K562 (cell line): ENCODE measurements at regions of chr7 and their contacts with region 1.

Region 1: GRCh38 chr7:129825496-129826267 is 127.1 kb downstream of the UBE2H start:
- DNase-seq: peak; percentile 92 to 98 (median 94)
- ATAC-seq: peak; percentile 84
- H3K4me3 ChIP-seq: peak overlapping the region; percentile 47
- H3K27ac ChIP-seq: no peak overlapping the region; the same call in 2 of the 3 replicates
- H3K4me1 ChIP-seq: peaks cover 21 to 28% of the 10 kb centered on the region in 2 experiments; a peak in 4 of 5 replicates
- H3K27me3 ChIP-seq: 0 out of 5 replicates have a peak, but pooled peaks cover 0 to 5% of the 10 kb centered on the region in 2 experiments
- CTCF ChIP-seq: peak in 2 of 3 experiments; percentile 82 to 90; a peak in 5 of 6 replicates
- EP300 ChIP-seq: no peak
- POLR2A ChIP-seq: no peak
- RAD21 ChIP-seq: peak; percentile 75 to 80

Region 2: GRCh38 chr7:129224251-129225205 is 601.2 kb before region 1 on chr7 and contains the start of gene AHCYL2:
- CTCF ChIA-PET with region 1: no interaction called
- POLR2A ChIA-PET with region 1: no interaction called
- in situ Hi-C with region 1: no loop called
- intact Hi-C with region 1: loop called (anchors 10 kb)
- DNase-seq: peak; percentile 98 to 100 (median 98)
- ATAC-seq: peak; percentile 97
- H3K4me3 ChIP-seq: peak within 1 kb of the TSS; percentile 73
- H3K27ac ChIP-seq: peak within 1 kb of the TSS; percentile 90
- H3K4me1 ChIP-seq: peaks cover 5 to 11% of the 10 kb centered on the region in 2 experiments; a peak in 4 of 5 replicates
- H3K27me3 ChIP-seq: peaks cover 0 to 5% of the 10 kb centered on the region in 2 experiments; a peak in 1 of 5 replicates
- CTCF ChIP-seq: peak in 1 of 3 experiments; percentile 21; a peak in 1 of 6 replicates
- EP300 ChIP-seq: no peak; the same call in 1 of the 2 replicates
- POLR2A ChIP-seq: peak; percentile 78
- RAD21 ChIP-seq: no peak
- polyA plus RNA-seq, gene AHCYL2: 0.93 to 2.0 TPM

Region 3: DNA sequence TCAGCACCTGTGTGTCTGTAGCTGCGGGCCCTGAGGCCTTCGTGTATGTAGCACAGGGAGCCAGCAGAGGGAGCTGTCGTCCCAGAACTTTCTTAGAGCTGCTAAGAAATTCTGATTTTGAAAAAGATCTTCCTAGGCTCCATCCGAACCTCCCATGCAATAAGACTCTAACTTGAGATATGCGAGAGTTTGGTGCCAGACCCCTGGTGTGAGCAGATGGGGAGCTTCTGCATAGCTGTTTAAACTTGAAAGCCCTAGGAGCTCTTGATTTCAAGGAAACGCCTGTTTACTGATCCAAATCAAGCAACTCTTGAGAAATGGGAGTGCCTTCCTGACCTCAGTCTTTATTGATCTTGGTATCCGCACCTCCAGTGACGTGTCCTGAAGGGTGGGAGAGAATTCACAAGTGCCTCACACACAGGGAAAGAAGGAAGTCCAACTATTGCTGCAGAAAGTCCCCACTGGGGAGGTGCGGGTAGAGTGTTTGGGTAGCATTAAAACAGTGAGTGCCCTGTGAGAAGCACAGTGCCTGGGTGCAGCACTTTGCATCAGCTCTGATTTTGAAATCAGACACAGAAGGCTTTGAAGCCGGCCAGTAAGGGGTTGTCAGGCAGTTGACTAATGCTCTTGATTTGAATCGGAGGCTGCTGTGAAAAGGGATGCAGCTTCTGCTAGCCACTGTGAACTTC is 457.8 kb before region 1 on chr7:
- CTCF ChIA-PET with region 1: no interaction called
- POLR2A ChIA-PET with region 1: no interaction called
- in situ Hi-C with region 1: no loop called
- intact Hi-C with region 1: loop called (anchors 5 kb)
- DNase-seq: peak; percentile 79 to 91 (median 83)
- ATAC-seq: peak; percentile 96
- H3K4me3 ChIP-seq: 0 out of 2 replicates have a peak overlapping the region, but pooled peaks have one; percentile 0
- H3K27ac ChIP-seq: no peak overlapping the region
- H3K4me1 ChIP-seq: peaks cover 6 to 15% of the 10 kb centered on the region in 2 experiments; a peak in 4 of 5 replicates
- H3K27me3 ChIP-seq: no peaks in the 10 kb centered on the region
- CTCF ChIP-seq: peak; percentile 91 to 99 (median 98)
- EP300 ChIP-seq: no peak
- POLR2A ChIP-seq: no peak
- RAD21 ChIP-seq: peak; percentile 90 to 94

Region 4: DNA sequence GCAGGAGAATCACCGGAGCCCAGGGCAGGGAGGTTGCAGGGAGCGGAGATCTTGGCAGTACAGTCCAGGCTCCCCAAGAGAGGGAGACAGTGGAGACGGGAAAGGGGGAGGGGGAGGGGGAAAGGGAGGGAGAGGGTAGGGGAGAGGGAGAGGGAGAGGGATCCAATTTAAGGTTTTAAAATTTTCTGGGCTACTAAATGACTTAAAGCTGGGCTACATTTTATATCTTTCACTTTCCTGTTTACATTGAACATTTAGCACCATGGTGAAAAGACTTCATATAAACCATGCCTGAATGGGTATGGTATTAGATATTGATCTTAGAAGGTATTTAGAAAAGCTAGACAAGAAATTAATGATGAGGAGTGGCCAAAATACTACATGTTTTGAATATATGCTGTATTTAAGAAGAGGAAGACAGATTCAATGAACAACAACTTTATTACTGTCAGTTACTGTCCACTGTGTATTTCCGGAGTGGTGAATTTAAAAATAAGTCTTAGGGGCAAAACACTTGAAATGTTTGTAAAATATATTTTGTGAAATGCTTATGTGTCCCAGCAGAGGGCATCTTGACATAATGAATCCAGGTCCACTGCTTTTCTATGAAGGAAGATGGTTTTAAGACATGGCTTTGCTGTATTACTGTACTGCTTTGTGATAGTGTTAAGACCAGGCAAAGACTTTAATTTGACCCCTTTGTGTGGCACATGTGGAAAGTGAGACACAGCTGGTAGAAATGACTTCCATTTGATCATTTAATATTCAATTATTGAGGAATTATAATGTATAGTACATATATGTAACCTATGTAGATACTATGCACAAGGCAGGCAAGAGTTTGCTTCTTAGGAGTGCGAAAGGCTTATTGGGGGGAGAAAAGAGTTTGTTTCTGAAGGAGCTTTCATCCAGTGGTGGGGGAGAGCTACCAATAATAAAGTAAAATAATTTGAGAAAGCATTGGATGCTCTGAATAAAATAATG is 161.4 kb before region 1 on chr7:
- CTCF ChIA-PET with region 1: interaction called, 82 read pairs
- POLR2A ChIA-PET with region 1: interaction called, 3 read pairs
- in situ Hi-C with region 1: loop called (anchors 5 kb)
- intact Hi-C with region 1: loop called (anchors 1 kb)
- DNase-seq: peak; percentile 56 to 76 (median 65)
- ATAC-seq: peak; percentile 93
- H3K4me3 ChIP-seq: no peak overlapping the region
- H3K27ac ChIP-seq: no peak overlapping the region
- H3K4me1 ChIP-seq: no peaks in the 10 kb centered on the region
- H3K27me3 ChIP-seq: no peaks in the 10 kb centered on the region
- CTCF ChIP-seq: peak; percentile 71 to 97 (median 74); a peak in 5 of 6 replicates
- EP300 ChIP-seq: no peak
- POLR2A ChIP-seq: no peak
- RAD21 ChIP-seq: peak; percentile 98 to 100

Region 5: DNA sequence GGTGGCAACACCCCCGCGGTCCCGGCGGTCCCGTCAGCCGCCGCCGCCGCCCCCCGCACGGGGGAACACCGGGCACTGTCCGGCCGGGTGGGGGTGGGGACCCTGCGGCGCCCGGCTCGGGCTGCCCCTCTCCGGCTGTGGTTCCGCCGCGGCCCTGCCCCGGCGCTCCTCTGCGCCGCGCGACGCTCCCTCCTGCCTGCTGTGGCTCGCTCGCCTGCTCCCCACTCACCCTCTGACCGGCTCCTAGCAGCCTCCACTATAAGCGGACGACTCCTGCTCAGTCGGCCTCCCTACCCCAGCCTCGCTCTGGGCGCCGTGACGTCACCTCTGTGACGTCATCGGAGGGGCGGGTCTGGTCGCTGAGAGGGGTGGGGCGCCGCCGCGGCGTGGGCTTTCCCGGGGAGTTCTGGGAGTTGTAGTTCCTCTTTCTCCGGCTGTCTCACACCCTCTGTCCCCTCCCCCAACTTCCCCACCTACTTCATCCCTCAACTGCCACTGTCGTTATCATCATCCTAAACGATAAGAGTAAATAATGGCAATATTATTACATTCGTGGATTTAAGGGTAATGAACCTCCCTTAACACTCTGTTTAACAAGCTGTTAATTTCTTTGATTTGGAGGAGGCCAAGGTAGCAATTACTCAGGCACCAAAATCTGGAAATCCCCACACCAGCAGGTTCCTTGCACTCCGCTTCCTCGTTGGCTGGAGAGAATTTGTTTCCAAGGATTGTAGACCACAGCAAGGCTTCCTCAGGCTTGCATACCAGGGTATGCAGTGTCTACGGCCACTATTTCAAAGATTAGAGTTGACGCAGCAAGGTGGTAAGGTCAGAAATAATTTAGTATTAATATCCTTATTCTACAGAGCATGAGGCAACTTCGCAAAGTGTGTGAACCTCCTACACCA is 127.2 kb after region 1 on chr7 and contains the start of gene UBE2H:
- CTCF ChIA-PET with region 1: no interaction called
- POLR2A ChIA-PET with region 1: interaction called, 3 read pairs
- in situ Hi-C with region 1: no loop called
- intact Hi-C with region 1: loop called (anchors 2 kb)
- DNase-seq: peak; percentile 98 to 99 (median 99)
- ATAC-seq: peak; percentile 80
- H3K4me3 ChIP-seq: peak within 1 kb of the TSS; percentile 69
- H3K27ac ChIP-seq: peak within 1 kb of the TSS; percentile 74
- H3K4me1 ChIP-seq: peaks cover 45 to 53% of the 10 kb centered on the region in 2 experiments
- H3K27me3 ChIP-seq: no peaks in the 10 kb centered on the region
- CTCF ChIP-seq: peak in 1 of 3 experiments; percentile 21; a peak in 1 of 6 replicates
- EP300 ChIP-seq: no peak; the same call in 1 of the 2 replicates
- POLR2A ChIP-seq: peak; percentile 73
- RAD21 ChIP-seq: peak in 1 of 2 experiments; percentile 12; a peak in 1 of 4 replicates
- polyA plus RNA-seq, gene UBE2H: 6.3 to 6.9 TPM

Region 6: GRCh38 chr7:130010689-130011412 is 185.2 kb after region 1 on chr7:
- CTCF ChIA-PET with region 1: interaction called, 25 read pairs
- POLR2A ChIA-PET with region 1: interaction called, 3 read pairs
- in situ Hi-C with region 1: loop called (anchors 5 kb)
- intact Hi-C with region 1: loop called (anchors 1 kb)
- DNase-seq: peak; percentile 84 to 93 (median 87)
- ATAC-seq: peak; percentile 72
- H3K4me3 ChIP-seq: no peak overlapping the region
- H3K27ac ChIP-seq: peak overlapping the region; percentile 73; the same call in 2 of the 3 replicates
- H3K4me1 ChIP-seq: peaks cover 15 to 19% of the 10 kb centered on the region in 2 experiments
- H3K27me3 ChIP-seq: no peaks in the 10 kb centered on the region
- CTCF ChIP-seq: peak; percentile 95 to 98 (median 97)
- EP300 ChIP-seq: no peak
- POLR2A ChIP-seq: no peak
- RAD21 ChIP-seq: peak; percentile 97 to 98